ENCODE measurements at regions of chr1 and their contacts with region 1.

Region 1: GRCh38 chr1:147611021-147611426 is 59.3 kb downstream of the ACP6 start:
- DNase-seq: no peak
- H3K4me3 ChIP-seq: no peak overlapping the region
- H3K27me3 ChIP-seq: no peaks in the 10 kb centered on the region
- CTCF ChIP-seq: no peak

Region 2: GRCh38 chr1:147545133-147545532 is 65.9 kb before region 1 on chr1:
- CTCF ChIA-PET with region 1: no interaction called
- POLR2A ChIA-PET with region 1: no interaction called
- DNase-seq: no peak
- H3K4me3 ChIP-seq: no peak overlapping the region
- H3K27me3 ChIP-seq: no peaks in the 10 kb centered on the region
- CTCF ChIP-seq: no peak

Region 3: GRCh38 chr1:147627435-147628110 is 16.5 kb after region 1 on chr1:
- CTCF ChIA-PET with region 1: interaction called, 15 read pairs
- POLR2A ChIA-PET with region 1: no interaction called
- DNase-seq: no peak
- H3K4me3 ChIP-seq: no peak overlapping the region
- H3K27me3 ChIP-seq: no peaks in the 10 kb centered on the region
- CTCF ChIP-seq: peak; percentile 96